Activated T-helper 1 cell treated with anti-CD3 and anti-CD28 coated beads, Interleukin-12 subunit alpha, Interleukin-12 subunit beta, Interleukin-2, Interleukin-4 antibody, amounts not matched to agents 30 ng/mL and 10 ng/mL and 1 ng/mL, durations not matched to agents 14 hours and 24 hours and 36 hours (primary cell): ENCODE measurements at regions of chr19 and their contacts with region 1.

Region 1: GRCh38 chr19:48468775-48469288 is 337 bp upstream of the CYTH2 start:
- DNase-seq: peak; percentile 100
- H3K4me3 Mint-ChIP-seq: peak overlapping the region; percentile 90
- H3K27ac Mint-ChIP-seq: peak overlapping the region; percentile 88
- H3K4me1 Mint-ChIP-seq: peaks cover 12% of the 10 kb centered on the region
- H3K27me3 Mint-ChIP-seq: no peaks in the 10 kb centered on the region

Region 2: DNA sequence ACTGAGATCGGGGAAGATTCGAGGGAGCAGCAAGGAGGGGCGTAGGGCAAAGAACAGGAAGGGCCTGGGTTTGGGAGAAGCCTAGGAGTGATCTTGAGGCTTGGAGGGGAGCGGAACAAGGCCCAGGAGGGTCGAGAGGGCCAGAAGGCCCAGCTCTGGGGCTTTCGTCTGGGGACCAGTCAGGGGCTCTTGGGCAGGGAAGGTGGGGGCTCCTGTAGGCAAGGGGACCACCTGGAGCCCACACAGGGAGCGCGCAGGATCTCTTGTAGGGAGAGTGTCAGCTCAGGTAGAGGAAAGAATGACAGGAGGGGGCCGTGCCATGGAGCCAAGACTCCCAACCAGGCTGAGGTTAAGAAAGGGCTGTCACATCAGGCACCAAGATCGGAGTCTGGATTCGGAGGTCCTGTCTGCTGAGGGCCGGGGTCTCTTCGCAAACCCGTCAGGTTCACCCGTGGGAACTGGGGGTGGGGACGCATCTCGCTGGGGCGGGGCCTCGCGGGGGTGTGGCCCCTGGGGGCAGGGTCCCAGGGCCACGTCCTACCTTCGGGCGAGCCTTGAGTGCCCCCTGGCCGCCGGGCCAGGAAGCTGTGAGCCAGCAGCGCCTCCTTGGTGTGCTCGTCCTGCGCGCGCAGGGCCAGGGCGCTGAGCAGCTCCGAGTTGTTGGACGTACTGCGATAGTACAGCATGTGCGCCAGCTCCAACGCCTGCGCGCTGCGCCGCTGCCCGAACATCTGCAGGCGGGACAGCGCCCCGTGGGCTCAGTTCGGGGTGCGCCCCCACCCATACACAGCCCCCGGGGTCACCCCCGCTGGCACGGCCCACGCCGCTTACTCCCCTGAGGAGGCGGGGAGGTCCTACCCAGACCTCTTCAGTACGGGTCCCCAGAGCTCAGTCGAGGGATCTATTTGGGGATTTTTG is 135.1 kb before region 1 on chr19:
- intact Hi-C with region 1: loop called (anchors 1 kb)
- DNase-seq: peak; percentile 92
- H3K4me3 Mint-ChIP-seq: peak overlapping the region; percentile 95
- H3K27ac Mint-ChIP-seq: peak overlapping the region; percentile 97
- H3K4me1 Mint-ChIP-seq: peaks cover 55% of the 10 kb centered on the region
- H3K27me3 Mint-ChIP-seq: peaks cover 1% of the 10 kb centered on the region

Region 3: GRCh38 chr19:48445606-48446481 is 23.0 kb before region 1 on chr19 and contains the start of gene GRWD1:
- intact Hi-C with region 1: loop called (anchors 1 kb)
- DNase-seq: peak; percentile 92
- H3K4me3 Mint-ChIP-seq: peak within 1 kb of the TSS; percentile 92
- H3K27ac Mint-ChIP-seq: peak within 1 kb of the TSS; percentile 90
- H3K4me1 Mint-ChIP-seq: peaks cover 19% of the 10 kb centered on the region
- H3K27me3 Mint-ChIP-seq: peaks cover 25% of the 10 kb centered on the region
- total RNA-seq, gene GRWD1: 96.0 and 100 TPM in 2 replicates

Region 4: DNA sequence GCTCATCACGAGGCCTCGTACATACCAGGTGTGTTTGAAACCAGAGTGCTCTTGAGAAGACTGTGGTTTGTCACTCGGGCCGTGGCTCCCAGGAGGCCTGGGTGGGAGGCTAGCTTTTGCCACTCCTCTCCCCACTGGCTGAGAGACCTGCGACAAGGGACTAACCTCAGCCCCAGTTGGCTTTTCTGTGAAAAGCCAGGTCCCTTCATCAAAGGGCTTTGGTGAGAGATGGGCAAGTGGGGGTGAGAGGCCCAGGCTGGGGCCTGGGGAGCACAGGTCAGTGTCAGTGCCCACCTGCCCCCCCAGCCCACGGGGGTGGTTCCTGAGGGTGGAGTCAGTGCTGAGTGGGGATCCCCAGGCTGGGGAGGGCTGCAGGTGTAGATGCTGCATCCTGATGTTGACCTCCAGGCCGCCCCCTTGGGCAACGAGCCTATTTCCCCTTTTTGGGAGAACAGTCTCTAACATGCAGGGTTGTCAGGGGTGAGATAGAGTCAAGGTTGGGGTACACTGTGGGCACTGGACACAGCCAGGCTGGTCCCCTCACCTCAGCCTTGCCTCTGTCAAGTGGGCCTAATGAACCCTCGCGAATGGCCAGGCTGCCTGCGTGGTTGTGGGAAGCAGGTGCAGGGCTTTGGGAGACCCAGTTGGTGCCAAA is 12.8 kb before region 1 on chr19:
- intact Hi-C with region 1: no loop called
- DNase-seq: no peak
- H3K4me3 Mint-ChIP-seq: no peak overlapping the region
- H3K27ac Mint-ChIP-seq: no peak overlapping the region
- H3K4me1 Mint-ChIP-seq: peaks cover 7% of the 10 kb centered on the region
- H3K27me3 Mint-ChIP-seq: no peaks in the 10 kb centered on the region

Region 5: GRCh38 chr19:48513289-48514122 is 44.7 kb after region 1 on chr19:
- intact Hi-C with region 1: loop called (anchors 1 kb)
- DNase-seq: peak; percentile 64
- H3K4me3 Mint-ChIP-seq: no peak overlapping the region
- H3K27ac Mint-ChIP-seq: peak overlapping the region; percentile 46
- H3K4me1 Mint-ChIP-seq: peaks cover 14% of the 10 kb centered on the region
- H3K27me3 Mint-ChIP-seq: peaks cover 3% of the 10 kb centered on the region

Region 6: DNA sequence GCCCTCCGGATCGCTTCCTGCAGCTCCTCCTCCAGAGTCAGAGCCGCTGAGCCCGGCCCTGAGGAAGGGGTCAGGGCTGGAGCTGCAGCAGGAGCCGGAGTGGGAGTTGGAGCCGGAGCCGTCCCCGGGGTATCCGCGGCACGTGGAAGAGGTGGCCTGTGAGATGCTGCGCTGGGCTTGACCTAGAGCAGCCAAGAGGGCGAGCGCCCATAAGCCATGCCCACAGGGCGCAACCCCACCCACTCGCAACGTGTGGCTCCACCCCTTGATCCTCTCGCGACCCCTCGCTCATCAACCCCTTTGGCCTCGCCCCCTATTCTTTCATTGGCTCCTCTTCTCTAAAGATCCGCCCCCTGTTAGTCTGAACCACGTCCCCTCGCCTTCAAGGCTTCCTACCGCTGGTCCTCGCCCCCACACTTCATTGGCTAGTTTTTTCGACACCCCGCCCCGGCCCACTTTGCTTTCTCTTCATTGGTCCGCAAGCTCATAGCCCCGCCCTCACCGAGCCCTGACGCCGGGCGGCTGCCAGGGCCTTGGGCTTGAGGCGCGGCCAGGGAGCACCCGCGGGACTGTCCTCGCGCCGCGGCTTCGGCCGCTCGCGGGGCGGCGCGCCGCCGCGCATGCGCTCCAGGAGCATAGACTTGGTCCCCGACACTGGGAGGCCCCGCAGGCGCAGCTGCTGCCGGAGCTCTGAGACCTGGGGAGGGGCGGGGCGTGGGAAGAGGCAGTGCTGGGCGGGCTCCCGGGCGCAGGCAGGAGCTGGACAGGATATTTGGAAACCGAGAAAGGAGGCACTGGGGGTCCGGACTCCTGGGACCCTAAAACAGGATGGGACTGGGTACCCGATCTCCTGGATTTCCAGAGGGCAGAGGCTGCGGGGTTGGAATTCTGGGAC is 245.3 kb after region 1 on chr19:
- intact Hi-C with region 1: loop called (anchors 1 kb)
- DNase-seq: peak; percentile 98
- H3K4me3 Mint-ChIP-seq: peak overlapping the region; percentile 80
- H3K27ac Mint-ChIP-seq: peak overlapping the region; percentile 83
- H3K4me1 Mint-ChIP-seq: peaks cover 8% of the 10 kb centered on the region
- H3K27me3 Mint-ChIP-seq: peaks cover 1% of the 10 kb centered on the region